Right ventricle myocardium inferior (tissue), 1 donor: ENCODE measurements at regions of chr19 and their contacts with region 1.

Region 1: DNA sequence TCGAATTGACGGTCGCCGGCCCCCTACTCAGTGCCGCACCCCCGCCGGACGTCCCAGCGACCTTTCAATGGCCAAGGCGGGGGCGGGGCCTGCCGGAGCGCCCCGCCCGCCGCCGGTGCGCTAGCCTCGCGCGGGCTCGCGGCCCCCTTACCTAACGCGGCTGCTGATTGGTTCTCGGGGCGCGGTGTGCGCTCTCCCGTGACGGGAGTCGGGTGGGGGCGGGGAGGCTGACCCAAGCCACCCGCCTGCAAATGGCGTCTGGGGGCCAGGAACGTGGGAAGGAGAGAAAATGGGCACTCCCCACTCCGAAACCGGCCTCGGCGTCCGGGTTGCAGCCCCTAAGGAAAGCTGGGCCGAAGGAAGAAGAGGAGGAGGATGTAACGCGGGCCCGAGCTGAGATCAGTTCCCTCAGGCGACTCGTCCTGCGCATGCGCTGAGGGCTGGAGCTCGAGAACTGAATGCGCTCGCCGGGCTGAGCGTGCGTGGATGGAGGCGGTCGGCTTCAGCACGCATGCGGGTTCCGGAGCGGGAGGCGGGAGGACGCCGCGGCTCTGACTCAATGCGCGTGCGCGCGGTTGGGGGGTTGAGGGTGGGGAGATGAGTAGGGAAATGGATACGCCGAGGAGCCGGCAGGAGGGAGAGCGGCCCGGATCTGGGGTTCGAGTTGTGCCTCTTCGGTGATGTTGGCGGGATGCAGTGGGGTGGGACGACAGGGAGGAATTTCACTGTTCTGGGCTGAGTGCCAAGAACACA is at the start of gene SMG9:
- DNase-seq: peak; percentile 99
- ATAC-seq: peak; percentile 96
- total RNA-seq, gene SMG9: 15.7 TPM

Region 2: DNA sequence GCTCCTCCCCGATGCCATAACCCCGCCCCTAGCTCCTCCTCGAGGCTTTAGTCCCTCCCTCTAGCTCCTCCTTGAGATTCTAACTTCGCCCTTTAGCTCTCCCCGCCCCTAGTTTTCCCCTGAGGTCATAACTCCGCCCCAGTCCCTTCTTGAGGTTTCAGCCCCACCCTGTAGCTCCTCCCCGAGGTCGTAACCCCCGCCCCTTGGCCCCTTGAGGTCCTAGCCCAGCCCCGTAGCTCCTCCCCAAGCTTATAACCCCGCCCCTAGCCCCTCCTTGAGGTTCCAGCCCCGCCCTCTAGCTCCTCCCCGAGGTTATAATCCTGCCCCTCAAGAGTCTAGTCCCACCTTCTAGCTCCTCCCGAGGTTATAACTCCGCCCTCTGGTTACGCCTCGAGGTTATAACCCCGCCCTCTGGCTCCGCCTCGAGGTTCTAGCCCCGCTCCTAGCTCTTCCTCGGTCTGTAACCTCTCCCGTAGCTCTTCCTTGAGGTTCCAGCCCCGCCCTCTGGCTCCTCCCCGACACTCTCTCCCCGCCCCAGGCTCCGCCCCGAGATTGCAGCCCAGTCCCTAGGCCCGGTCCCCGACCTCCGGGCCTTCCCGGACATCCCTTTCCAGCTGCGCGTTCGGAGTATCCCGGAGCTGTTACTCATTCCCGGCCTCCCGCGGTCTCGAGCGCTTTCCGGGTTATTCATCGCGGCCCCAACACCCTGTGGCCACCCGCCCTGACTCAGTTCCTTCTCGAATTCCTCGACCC is 86.1 kb before region 1 on chr19:
- intact Hi-C with region 1: loop called (anchors 2 kb)
- DNase-seq: peak; percentile 99
- ATAC-seq: peak; percentile 94

Region 3: GRCh38 chr19:43923875-43924274 is 169.2 kb after region 1 on chr19:
- intact Hi-C with region 1: no loop called
- DNase-seq: no peak
- ATAC-seq: no peak

Region 4: GRCh38 chr19:43934985-43935708 is 180.5 kb after region 1 on chr19 and contains the start of gene ZNF45:
- intact Hi-C with region 1: loop called (anchors 10 kb)
- DNase-seq: peak; percentile 94
- ATAC-seq: peak; percentile 98
- total RNA-seq, gene ZNF45: 7.8 TPM